Right cardiac atrium (tissue), 5 donors: ENCODE measurements at regions of chr11 and their contacts with region 1.

Region 1: DNA sequence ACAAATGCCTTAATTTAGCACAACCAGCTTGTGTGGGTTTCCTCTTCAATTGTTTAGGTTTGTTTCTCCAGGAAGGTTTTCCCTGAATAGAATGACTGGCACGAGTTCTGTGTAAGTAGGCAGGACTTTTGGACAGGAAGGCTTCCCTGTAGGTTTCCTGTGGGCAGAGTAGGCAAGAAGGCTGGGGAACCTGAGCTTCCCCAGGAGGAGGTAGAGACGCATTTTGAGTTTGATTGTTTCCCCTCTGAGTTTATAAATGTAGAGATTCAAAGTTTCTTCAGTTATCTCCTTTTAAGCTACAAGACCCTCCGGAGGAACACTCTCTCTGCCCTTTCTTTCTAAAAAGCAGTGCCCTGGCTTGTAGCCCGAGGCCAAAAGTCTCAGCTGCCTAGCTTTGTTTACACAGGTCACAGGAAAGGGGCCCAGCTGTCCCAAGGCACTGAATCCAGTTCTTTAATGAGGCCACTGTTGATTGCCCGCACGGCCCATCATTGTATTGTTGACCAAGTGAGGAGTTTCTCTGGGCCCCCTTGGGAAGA is 66.6 kb upstream of the RDX start:
- DNase-seq: peak in 1 of 3 donors; percentile 34
- ATAC-seq: peak; percentile 70 to 84
- H3K4me3 ChIP-seq: no peak overlapping the region
- H3K27ac ChIP-seq: peak overlapping the region; percentile 52
- H3K4me1 ChIP-seq: peaks cover 2% of the 10 kb centered on the region
- H3K27me3 ChIP-seq: no peaks in the 10 kb centered on the region

Region 2: DNA sequence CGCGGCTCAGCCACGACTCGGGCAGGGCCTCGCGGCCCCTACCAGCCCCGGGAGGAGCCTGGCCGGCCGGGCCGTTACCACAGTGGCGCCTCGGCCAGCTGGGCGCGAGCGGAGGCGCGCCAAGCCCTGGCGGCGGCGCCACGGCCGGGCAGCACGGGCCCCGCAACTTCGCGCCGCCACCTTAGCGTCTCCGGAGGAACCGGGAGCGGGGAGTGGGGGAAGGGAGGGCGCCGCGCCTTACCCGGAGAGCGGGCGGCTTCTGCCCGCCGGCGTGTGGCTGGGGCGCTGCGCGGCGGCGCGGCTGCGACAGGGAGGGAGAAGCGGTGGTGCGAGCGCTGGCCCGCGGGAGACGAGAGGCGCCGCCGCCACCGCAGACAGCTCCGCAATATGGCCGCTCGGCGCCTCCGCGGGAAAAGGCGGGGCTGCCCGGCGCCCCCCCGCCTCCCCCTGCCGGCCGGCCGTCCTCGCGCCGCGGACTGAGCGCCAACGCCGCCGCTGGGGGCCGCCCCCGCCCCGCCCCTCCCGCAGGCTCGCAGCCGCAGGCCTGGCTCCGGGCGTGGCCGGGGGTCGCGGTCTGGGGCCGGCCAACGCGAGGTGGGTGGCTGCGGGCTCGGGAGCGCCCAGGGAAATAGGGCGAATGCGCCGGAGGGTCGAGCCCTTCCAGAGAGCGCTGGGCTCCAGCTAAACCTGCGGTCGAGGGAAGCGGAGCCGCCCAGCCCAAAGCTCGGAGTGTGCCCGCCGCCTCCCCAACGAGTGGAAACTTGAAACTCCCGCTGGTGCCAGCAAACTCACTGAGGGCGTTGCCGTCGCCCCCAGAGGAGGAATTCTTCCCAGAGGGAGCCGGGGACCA is 66.6 kb before region 1 on chr11 and contains the start of gene RDX:
- intact Hi-C with region 1: loop called in 2 of 4 experiments (anchors 10 kb)
- DNase-seq: peak; percentile 83 to 92 (median 91)
- ATAC-seq: peak; percentile 89 to 93
- H3K4me3 ChIP-seq: peak within 1 kb of the TSS; percentile 86
- H3K27ac ChIP-seq: peak within 1 kb of the TSS; percentile 86
- H3K4me1 ChIP-seq: peaks cover 1% of the 10 kb centered on the region
- H3K27me3 ChIP-seq: no peaks in the 10 kb centered on the region
- total RNA-seq, gene RDX: 110 to 135 (median 122) TPM

Region 3: GRCh38 chr11:110409174-110409573 is 46.1 kb after region 1 on chr11:
- intact Hi-C with region 1: no loop called
- DNase-seq: no peak
- ATAC-seq: peak in 1 of 2 donors; percentile 48
- H3K4me3 ChIP-seq: no peak overlapping the region
- H3K27ac ChIP-seq: no peak overlapping the region
- H3K4me1 ChIP-seq: no peaks in the 10 kb centered on the region
- H3K27me3 ChIP-seq: no peaks in the 10 kb centered on the region